Activated T-helper 2 cell treated with anti-CD3 and anti-CD28 coated beads, Interferon-gamma antibody, Interleukin-2, Interleukin-4, amounts not matched to agents 10 μg/mL and 5 μg/mL and 100 μg/mL, durations not matched to agents 14 hours and 24 hours and 36 hours (primary cell): ENCODE measurements at regions of chr4 and their contacts with region 1.

Region 1: DNA sequence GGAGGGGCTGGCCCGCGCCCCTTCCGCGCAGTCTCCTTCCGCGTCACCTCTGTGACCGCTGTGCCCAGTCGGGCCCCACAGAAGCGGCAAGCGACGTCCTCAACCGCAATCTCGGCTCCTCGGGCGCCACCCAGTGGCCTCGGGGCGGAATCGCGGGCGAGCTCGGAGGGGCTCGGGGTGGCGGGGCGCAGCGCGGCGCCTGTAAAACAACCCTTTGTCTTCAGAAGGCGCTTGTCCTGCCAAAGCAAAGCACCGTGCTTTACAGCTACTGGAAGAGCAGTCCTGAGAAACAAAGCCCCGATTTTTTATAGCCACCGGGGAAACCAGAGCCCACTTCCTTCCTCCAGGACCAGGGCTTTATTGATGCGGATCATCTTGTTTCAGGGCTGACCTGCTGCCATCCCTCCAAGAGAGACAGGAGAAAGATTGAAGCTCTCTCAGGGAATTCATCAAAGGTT is 37.3 kb upstream of the CDKN2AIP start:
- DNase-seq: peak; percentile 84
- H3K4me3 Mint-ChIP-seq: peak overlapping the region; percentile 79
- H3K27ac Mint-ChIP-seq: peak overlapping the region; percentile 65
- H3K4me1 Mint-ChIP-seq: peaks cover 13% of the 10 kb centered on the region
- H3K27me3 Mint-ChIP-seq: peaks cover 7% of the 10 kb centered on the region

Region 2: GRCh38 chr4:183287677-183288076 is 119.5 kb before region 1 on chr4:
- intact Hi-C with region 1: loop called (anchors 5 kb)
- DNase-seq: no peak
- H3K4me3 Mint-ChIP-seq: no peak overlapping the region
- H3K27ac Mint-ChIP-seq: no peak overlapping the region
- H3K4me1 Mint-ChIP-seq: no peaks in the 10 kb centered on the region
- H3K27me3 Mint-ChIP-seq: no peaks in the 10 kb centered on the region

Region 3: DNA sequence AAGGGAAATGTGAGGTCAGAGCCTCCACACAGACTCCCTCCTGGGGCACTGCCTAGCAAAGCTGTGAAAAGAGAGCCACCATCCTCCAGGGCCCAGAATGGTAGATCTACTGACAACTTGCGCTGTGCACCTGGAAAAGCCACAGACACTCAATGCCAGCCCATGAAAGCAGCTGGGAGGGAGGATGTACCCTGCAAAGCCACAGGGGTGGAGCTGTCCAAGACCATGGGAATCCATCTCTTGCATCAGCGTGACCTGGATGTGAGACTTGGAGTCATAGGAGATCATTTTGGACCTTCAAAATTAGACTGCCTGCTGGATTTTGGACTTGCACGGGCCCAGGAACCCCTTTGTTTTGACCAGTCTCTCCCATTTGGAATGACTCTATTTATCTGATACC is 60.1 kb after region 1 on chr4:
- intact Hi-C with region 1: no loop called
- DNase-seq: no peak
- H3K4me3 Mint-ChIP-seq: no peak overlapping the region
- H3K27ac Mint-ChIP-seq: no peak overlapping the region
- H3K4me1 Mint-ChIP-seq: peaks cover 2% of the 10 kb centered on the region
- H3K27me3 Mint-ChIP-seq: no peaks in the 10 kb centered on the region